HEK293 (cell line): ENCODE measurements at regions of chr12 and their contacts with region 1.

Region 1: GRCh38 chr12:77010691-77011548 is 54.4 kb downstream of the E2F7 start:
- H3K4me3 ChIP-seq: no peak overlapping the region
- H3K27ac ChIP-seq: no peak overlapping the region
- H3K4me1 ChIP-seq: no peaks in the 10 kb centered on the region
- CTCF ChIP-seq: peak; percentile 59

Region 2: GRCh38 chr12:76621582-76622024 is 389.3 kb before region 1 on chr12:
- CTCF ChIA-PET with region 1: interaction called, 33 read pairs
- POLR2A ChIA-PET with region 1: no interaction called
- H3K4me3 ChIP-seq: no peak overlapping the region
- H3K27ac ChIP-seq: no peak overlapping the region
- H3K4me1 ChIP-seq: no peaks in the 10 kb centered on the region
- CTCF ChIP-seq: peak; percentile 80

Region 3: DNA sequence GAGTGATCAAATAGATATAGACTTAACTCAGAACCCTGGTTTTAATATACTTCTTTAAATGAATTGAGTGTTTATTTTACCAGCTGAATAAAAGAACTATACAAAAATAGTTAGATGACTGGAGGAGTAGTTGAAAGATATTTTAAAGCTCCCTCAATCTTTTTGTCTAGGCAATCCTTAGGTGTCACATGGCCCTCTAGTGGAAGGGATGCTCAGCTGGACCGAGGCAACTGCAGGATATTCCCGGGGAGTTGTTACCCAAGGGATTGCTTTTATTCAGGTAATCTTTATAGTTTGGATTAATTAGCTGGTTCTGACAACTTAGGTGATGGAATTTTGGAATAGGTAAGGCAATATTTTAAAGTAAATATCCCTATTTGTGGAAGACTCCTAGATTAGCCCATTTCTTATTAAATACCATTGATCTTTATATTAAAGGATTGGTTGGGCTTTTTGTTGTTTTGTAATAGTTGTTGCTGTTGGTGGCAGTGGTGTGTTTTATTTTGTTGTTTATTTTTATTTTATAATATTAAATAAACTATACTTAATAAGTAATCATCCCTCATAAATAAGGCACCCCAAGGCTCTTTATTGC is 189.9 kb before region 1 on chr12:
- CTCF ChIA-PET with region 1: interaction called, 11 read pairs
- POLR2A ChIA-PET with region 1: no interaction called
- H3K4me3 ChIP-seq: no peak overlapping the region
- H3K27ac ChIP-seq: no peak overlapping the region
- H3K4me1 ChIP-seq: no peaks in the 10 kb centered on the region
- CTCF ChIP-seq: no peak

Region 4: DNA sequence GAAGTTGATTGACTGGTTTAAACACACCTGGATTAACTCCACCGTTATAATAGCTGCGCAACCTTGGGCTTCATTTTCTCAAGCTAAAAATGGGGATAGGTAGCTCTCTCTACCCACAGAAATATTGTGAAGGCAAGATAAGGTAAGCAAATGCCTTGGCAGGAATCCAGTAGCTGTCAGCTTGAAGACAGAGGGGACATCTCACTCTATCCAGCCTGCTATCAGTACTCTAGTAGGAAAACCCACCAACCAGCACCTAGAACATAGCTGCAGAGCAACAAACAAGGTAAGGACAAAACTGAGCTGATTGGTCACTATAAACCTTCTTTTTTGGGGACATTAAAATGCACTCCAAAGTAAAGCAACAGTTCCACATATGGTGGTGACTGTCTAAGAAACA is 139.8 kb before region 1 on chr12:
- CTCF ChIA-PET with region 1: interaction called, 11 read pairs
- POLR2A ChIA-PET with region 1: no interaction called
- H3K4me3 ChIP-seq: no peak overlapping the region
- H3K27ac ChIP-seq: no peak overlapping the region
- H3K4me1 ChIP-seq: peaks cover 12% of the 10 kb centered on the region
- CTCF ChIP-seq: no peak

Region 5: GRCh38 chr12:77025782-77026314 is 14.9 kb after region 1 on chr12:
- CTCF ChIA-PET with region 1: interaction called, 24 read pairs
- POLR2A ChIA-PET with region 1: no interaction called
- H3K4me3 ChIP-seq: no peak overlapping the region
- H3K27ac ChIP-seq: no peak overlapping the region
- H3K4me1 ChIP-seq: no peaks in the 10 kb centered on the region
- CTCF ChIP-seq: no peak